B cell (primary cell): ENCODE measurements at regions of chr10 and their contacts with region 1.

Region 1: GRCh38 chr10:114499630-114500190 is 95.4 kb upstream of the AFAP1L2 start:
- DNase-seq: peak; percentile 75
- ATAC-seq: peak; percentile 26
- H3K4me3 ChIP-seq: peak overlapping the region in 3 of 5 experiments; percentile 4 to 51 (median 32)
- H3K4me3 Mint-ChIP-seq: peak overlapping the region; percentile 79
- H3K27ac ChIP-seq: peak overlapping the region; percentile 90 to 96
- H3K27ac Mint-ChIP-seq: peak overlapping the region; percentile 94
- H3K4me1 ChIP-seq: peaks cover 69 to 82% of the 10 kb centered on the region in 2 donors
- H3K4me1 Mint-ChIP-seq: peaks cover 84% of the 10 kb centered on the region
- H3K27me3 ChIP-seq: no peaks in the 10 kb centered on the region
- H3K27me3 Mint-ChIP-seq: no peaks in the 10 kb centered on the region
- CTCF ChIP-seq: no peak

Region 2: DNA sequence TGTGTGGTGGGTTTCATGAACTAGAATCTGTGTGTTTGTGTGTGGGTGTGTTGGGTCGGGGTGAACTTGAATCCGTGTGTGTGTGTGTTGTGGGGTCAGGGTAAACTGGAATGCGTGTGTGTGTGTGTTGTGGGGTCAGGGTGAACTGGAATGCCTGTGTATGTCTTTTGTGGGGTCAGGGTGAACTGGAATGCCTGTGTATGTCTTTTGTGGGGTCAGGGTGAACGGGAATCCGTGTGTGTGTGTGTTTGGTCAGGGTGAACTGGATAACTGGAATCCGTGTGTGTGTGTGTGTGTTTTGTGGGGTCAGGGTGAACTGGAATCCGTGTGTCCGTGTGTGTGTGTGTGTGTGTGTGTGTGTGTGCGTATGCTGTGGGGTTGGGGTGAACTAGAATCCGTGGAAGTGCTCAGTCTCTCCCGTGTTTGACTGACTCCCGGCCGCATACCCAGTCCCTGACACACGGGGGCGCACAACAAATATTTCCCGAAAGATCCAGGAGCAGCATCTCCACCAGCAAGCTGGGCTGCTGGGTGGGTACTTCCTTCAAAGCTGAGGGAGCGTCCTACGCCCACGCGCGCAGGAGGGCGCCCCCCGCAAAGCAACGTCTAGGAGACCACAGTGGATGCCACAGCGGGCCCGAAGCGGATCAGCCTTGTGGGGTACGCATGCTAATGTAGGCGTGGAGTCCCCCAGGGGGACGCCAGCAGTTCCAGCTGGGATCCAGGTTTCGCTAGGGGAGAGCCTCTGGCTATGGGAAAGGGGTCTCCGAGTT is 820.8 kb before region 1 on chr10:
- CTCF ChIA-PET with region 1: no interaction called
- POLR2A ChIA-PET with region 1: no interaction called
- intact Hi-C with region 1: loop called (anchors 10 kb)
- DNase-seq: peak; percentile 75
- ATAC-seq: peak; percentile 7
- H3K4me3 ChIP-seq: peak overlapping the region; percentile 51 to 97 (median 87)
- H3K4me3 Mint-ChIP-seq: peak overlapping the region; percentile 99
- H3K27ac ChIP-seq: peak overlapping the region; percentile 85 to 91
- H3K27ac Mint-ChIP-seq: peak overlapping the region; percentile 99
- H3K4me1 ChIP-seq: peaks cover 30 to 31% of the 10 kb centered on the region in 2 donors
- H3K4me1 Mint-ChIP-seq: peaks cover 43% of the 10 kb centered on the region
- H3K27me3 ChIP-seq: no peaks in the 10 kb centered on the region
- H3K27me3 Mint-ChIP-seq: peaks cover 2% of the 10 kb centered on the region
- CTCF ChIP-seq: peak; percentile 59

Region 3: GRCh38 chr10:114520453-114520852 is 20.7 kb after region 1 on chr10:
- CTCF ChIA-PET with region 1: interaction called, 115 read pairs
- POLR2A ChIA-PET with region 1: interaction called, 44 read pairs
- intact Hi-C with region 1: no loop called
- DNase-seq: no peak
- ATAC-seq: no peak
- H3K4me3 ChIP-seq: no peak overlapping the region
- H3K4me3 Mint-ChIP-seq: peak overlapping the region; percentile 1
- H3K27ac ChIP-seq: no peak overlapping the region
- H3K27ac Mint-ChIP-seq: peak overlapping the region; percentile 38
- H3K4me1 ChIP-seq: peaks cover 82 to 90% of the 10 kb centered on the region in 2 donors
- H3K4me1 Mint-ChIP-seq: peaks cover 95% of the 10 kb centered on the region
- H3K27me3 ChIP-seq: no peaks in the 10 kb centered on the region
- H3K27me3 Mint-ChIP-seq: no peaks in the 10 kb centered on the region
- CTCF ChIP-seq: no peak

Region 4: DNA sequence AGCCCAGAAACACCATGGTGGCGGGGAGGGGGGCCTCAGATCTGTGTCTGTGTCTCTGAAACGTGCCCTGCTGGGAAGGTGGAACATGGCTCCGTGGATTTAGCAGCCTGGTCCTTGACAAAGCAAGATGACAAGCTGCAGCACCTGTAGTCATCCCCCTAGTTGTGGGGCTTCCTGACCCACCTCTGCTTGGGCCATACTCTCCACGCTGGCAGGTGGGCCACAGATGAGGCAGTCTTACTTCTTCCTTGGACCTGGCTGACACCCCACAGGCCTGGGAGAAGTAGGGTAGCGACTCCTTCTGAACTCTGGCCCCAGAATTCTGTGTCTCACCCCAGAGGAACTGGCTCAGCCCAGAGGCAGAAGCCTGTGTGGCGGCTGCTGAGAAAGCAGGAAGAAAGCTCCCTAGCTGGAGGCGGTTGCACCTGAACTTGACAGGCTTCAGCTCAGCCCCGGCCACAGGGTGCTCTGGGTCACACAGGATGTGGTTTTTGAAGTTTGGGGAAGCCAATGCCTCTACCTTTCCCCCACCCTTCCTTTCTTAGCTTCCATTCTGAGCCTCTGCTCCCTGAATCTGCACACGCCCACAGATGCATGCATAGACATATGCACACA is 44.4 kb after region 1 on chr10:
- CTCF ChIA-PET with region 1: interaction called, 5 read pairs
- POLR2A ChIA-PET with region 1: interaction called, 16 read pairs
- intact Hi-C with region 1: loop called (anchors 1 kb)
- DNase-seq: peak; percentile 82
- ATAC-seq: peak; percentile 93
- H3K4me3 ChIP-seq: peak overlapping the region in 3 of 5 experiments; percentile 15 to 51 (median 26)
- H3K4me3 Mint-ChIP-seq: peak overlapping the region; percentile 52
- H3K27ac ChIP-seq: peak overlapping the region; percentile 77 to 86
- H3K27ac Mint-ChIP-seq: peak overlapping the region; percentile 90
- H3K4me1 ChIP-seq: peaks cover 35 to 83% of the 10 kb centered on the region in 2 donors
- H3K4me1 Mint-ChIP-seq: peaks cover 70% of the 10 kb centered on the region
- H3K27me3 ChIP-seq: no peaks in the 10 kb centered on the region
- H3K27me3 Mint-ChIP-seq: no peaks in the 10 kb centered on the region
- CTCF ChIP-seq: no peak

Region 5: DNA sequence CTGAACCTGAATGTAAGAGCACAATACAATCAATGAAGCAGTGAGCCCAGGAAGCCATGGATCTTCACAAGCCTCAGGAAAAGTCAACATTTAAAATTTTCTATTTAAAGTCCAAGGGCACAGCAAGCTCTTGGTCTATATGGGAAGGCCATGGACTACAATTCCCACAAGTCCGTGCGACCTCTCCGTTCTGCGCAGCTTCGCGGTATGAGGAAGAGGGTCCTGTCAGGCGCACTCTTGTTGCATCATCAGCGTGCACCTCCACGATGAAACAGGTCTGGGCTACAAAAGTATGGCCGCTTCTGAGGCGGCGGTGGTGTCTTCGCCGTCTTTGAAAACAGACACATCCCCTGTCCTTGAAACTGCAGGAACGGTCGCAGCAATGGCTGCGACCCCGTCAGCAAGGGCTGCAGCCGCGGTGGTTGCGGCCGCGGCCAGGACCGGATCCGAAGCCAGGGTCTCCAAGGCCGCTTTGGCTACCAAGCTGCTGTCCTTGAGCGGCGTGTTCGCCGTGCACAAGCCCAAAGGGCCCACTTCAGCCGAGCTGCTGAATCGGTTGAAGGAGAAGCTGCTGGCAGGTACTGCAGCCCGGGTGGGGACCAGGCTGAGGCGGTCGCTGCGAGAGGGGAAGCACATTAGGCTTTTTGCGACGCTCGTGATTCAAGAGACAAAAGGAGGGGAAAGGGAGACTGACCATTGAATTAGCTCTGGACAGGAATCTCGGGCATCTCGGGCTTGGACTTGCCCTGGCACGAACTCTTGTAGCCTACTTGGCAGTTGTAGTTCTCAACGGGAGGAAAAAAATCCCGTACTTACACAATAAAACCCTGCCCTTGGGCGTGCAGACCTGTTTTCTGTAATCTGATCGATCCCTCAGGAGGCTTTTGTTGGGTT is 438.5 kb after region 1 on chr10 and contains the start of gene TRUB1:
- CTCF ChIA-PET with region 1: no interaction called
- POLR2A ChIA-PET with region 1: no interaction called
- intact Hi-C with region 1: loop called (anchors 2 kb)
- DNase-seq: peak; percentile 93
- ATAC-seq: peak; percentile 100
- H3K4me3 ChIP-seq: peak within 1 kb of the TSS; percentile 81 to 99 (median 93)
- H3K4me3 Mint-ChIP-seq: peak within 1 kb of the TSS; percentile 95
- H3K27ac ChIP-seq: peak within 1 kb of the TSS; percentile 77 to 83
- H3K27ac Mint-ChIP-seq: peak within 1 kb of the TSS; percentile 92
- H3K4me1 ChIP-seq: peaks cover 15 to 16% of the 10 kb centered on the region in 2 donors
- H3K4me1 Mint-ChIP-seq: peaks cover 34% of the 10 kb centered on the region
- H3K27me3 ChIP-seq: no peaks in the 10 kb centered on the region
- H3K27me3 Mint-ChIP-seq: no peaks in the 10 kb centered on the region
- CTCF ChIP-seq: no peak
- total RNA-seq, gene TRUB1: 11.2 and 15.7 TPM in 2 replicates